ENCODE measurements at regions of chrX and their contacts with region 1.

Region 1: DNA sequence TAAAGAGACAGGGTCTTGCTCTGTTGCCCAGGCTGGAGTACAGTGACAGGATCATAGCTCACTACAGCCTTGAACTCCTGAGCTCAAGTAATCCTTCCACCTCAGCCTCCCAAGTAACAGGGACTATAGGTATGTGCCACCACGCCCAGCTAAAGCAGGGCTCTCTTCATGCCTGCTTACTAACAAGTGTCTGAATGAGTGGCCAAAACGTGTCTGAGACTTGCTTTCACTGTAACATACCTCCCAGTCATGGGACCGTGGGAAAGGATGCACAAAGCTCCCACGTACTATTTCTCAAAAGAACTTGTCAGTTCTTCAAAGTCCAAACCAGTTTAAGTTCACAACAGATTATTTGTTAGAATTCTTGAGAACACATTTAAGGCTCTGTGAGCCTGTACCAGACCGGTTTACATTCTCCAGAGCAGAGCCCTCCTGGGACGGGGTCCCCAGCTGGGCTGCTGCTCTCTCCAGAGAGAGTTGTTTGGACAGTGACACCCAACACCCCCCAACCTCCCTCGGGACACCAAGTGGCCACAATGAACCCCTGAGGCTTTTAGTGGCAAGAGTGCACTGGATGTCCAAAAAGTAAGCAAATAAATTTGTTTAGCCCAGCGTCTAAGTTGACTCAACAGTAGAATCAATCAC is 24.1 kb downstream of the SH3KBP1 start:
- H3K4me3 Mint-ChIP-seq: no peak overlapping the region
- H3K27ac Mint-ChIP-seq: peak overlapping the region; percentile 83
- H3K4me1 Mint-ChIP-seq: peaks cover 44% of the 10 kb centered on the region
- H3K27me3 Mint-ChIP-seq: no peaks in the 10 kb centered on the region

Region 2: GRCh38 chrX:19824603-19825002 is 38.7 kb before region 1 on chrX:
- intact Hi-C with region 1: loop called (anchors 5 kb)
- H3K4me3 Mint-ChIP-seq: no peak overlapping the region
- H3K27ac Mint-ChIP-seq: no peak overlapping the region
- H3K4me1 Mint-ChIP-seq: peaks cover 22% of the 10 kb centered on the region
- H3K27me3 Mint-ChIP-seq: no peaks in the 10 kb centered on the region

Measured in dendritic cell treated with granulocyte-macrophage colony-stimulating factor and Interleukin-4, amounts not matched to agents 40 ng/mL and 50 ng/mL, for 4 days (primary cell).